CD4-positive, alpha-beta T cell (primary cell): ENCODE measurements at regions of chr1 and their contacts with region 1.

Region 1: DNA sequence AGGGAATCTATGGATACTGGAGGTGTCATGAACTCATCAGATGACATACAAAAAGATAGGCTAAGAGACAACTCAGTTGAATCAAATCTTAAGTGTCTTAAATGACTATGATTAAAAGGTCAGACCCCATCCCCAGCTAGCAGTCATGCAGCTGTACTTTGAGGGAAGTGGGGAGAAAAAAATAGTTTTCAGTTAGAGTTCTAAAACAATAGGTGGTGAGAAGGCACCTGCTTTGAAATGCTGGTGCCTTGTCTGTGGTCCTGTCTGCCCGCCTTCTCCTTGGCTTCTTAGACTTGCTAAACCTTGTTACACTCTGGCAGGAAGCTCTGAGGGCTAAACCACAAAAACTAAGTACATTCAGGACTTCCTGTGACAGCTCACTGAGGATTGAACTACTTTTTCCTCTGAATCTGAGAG is 15.3 kb downstream of the CD2 start:
- DNase-seq: peak in 13 of 14 experiments; percentile 60 to 94 (median 68)
- ATAC-seq: peak; percentile 79
- H3K4me3 ChIP-seq: no peak overlapping the region
- H3K4me3 Mint-ChIP-seq: peak overlapping the region; percentile 66
- H3K27ac ChIP-seq: peak overlapping the region; percentile 88 to 89
- H3K27ac Mint-ChIP-seq: peak overlapping the region; percentile 99
- H3K4me1 ChIP-seq: peaks cover 74% of the 10 kb centered on the region
- H3K4me1 Mint-ChIP-seq: peaks cover 97% of the 10 kb centered on the region
- H3K27me3 ChIP-seq: no peaks in the 10 kb centered on the region
- H3K27me3 Mint-ChIP-seq: no peaks in the 10 kb centered on the region
- CTCF ChIP-seq: no peak

Region 2: DNA sequence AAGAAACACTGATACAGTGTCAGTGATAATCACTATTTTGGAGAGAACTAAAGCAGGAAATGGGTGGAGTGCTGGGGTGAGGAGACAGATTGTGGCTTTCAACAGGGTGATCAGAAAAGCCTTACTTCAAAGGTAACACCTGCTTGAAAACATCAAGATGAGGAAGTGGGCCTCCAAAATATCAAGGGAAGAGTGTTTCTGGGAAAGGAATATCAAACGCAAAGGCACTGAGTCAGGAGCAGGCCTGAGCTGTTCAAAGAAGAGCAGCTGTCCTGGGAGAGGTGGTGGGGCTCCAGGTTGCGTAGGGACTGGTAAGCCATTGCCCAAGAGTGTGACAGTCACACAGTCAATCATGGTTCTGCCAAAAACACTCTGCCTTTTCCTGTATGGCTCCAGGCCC is 443.6 kb before region 1 on chr1:
- CTCF ChIA-PET with region 1: no interaction called
- POLR2A ChIA-PET with region 1: no interaction called
- intact Hi-C with region 1: no loop called
- DNase-seq: peak; percentile 25 to 83 (median 53)
- ATAC-seq: peak; percentile 91
- H3K4me3 ChIP-seq: peak overlapping the region; percentile 22
- H3K4me3 Mint-ChIP-seq: peak overlapping the region; percentile 62
- H3K27ac ChIP-seq: peak overlapping the region; percentile 72 to 85
- H3K27ac Mint-ChIP-seq: peak overlapping the region; percentile 91
- H3K4me1 ChIP-seq: peaks cover 60% of the 10 kb centered on the region
- H3K4me1 Mint-ChIP-seq: peaks cover 98% of the 10 kb centered on the region
- H3K27me3 ChIP-seq: no peaks in the 10 kb centered on the region
- H3K27me3 Mint-ChIP-seq: no peaks in the 10 kb centered on the region
- CTCF ChIP-seq: no peak

Region 3: DNA sequence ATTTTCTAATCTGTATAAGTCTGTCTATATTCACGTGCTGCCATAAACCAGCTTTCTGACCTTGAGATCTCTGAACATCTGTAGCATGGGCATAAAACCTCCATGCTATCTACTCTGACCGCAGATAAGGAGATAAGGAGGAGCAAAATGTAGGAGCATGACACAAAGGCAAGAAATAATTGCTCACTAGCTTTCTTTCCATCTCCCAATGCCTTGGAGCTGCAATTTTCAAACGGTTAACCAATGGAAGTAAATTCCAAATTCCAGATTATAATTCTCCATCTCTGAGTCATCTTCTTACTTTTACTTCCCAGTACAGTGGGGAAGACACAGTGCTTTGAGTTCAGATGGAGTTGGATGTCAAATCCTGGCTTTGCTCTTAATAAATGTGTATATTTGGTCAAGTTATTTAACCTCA is 240.4 kb before region 1 on chr1:
- CTCF ChIA-PET with region 1: no interaction called
- POLR2A ChIA-PET with region 1: no interaction called
- intact Hi-C with region 1: no loop called
- DNase-seq: no peak
- ATAC-seq: no peak
- H3K4me3 ChIP-seq: no peak overlapping the region
- H3K4me3 Mint-ChIP-seq: no peak overlapping the region
- H3K27ac ChIP-seq: no peak overlapping the region
- H3K27ac Mint-ChIP-seq: no peak overlapping the region
- H3K4me1 ChIP-seq: no peaks in the 10 kb centered on the region
- H3K4me1 Mint-ChIP-seq: no peaks in the 10 kb centered on the region
- H3K27me3 ChIP-seq: no peaks in the 10 kb centered on the region
- H3K27me3 Mint-ChIP-seq: no peaks in the 10 kb centered on the region
- CTCF ChIP-seq: no peak

Region 4: DNA sequence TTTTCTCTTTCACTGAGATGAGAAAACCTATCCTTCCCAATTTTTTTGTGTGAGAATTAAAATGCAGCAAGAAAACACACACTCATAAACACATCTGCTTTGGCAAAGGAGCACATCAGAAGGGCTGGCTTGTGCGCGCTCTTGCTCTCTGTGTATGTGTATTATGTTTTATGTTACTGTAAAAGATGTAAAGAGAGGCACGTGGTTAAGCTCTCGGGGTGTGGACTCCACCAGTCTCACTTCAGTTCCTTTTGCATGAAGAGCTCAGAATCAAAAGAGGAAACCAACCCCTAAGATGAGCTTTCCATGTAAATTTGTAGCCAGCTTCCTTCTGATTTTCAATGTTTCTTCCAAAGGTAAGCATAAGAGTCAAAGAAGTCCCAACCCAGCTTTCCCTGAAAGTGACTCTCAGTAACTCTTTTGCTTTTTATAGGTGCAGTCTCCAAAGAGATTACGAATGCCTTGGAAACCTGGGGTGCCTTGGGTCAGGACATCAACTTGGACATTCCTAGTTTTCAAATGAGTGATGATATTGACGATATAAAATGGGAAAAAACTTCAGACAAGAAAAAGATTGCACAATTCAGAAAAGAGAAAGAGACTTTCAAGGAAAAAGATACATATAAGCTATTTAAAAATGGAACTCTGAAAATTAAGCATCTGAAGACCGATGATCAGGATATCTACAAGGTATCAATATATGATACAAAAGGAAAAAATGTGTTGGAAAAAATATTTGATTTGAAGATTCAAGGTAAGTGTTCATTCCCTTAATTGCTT is 15.2 kb before region 1 on chr1 and contains the start of gene CD2:
- CTCF ChIA-PET with region 1: interaction called, 10 read pairs
- POLR2A ChIA-PET with region 1: interaction called, 412 read pairs
- intact Hi-C with region 1: loop called (anchors 1 to 2 kb)
- DNase-seq: peak in 11 of 14 experiments; percentile 47 to 82 (median 60)
- ATAC-seq: peak; percentile 86
- H3K4me3 ChIP-seq: peak within 1 kb of the TSS; percentile 78
- H3K4me3 Mint-ChIP-seq: peak within 1 kb of the TSS; percentile 97
- H3K27ac ChIP-seq: peak within 1 kb of the TSS; percentile 81 to 82
- H3K27ac Mint-ChIP-seq: peak within 1 kb of the TSS; percentile 99
- H3K4me1 ChIP-seq: peaks cover 19% of the 10 kb centered on the region
- H3K4me1 Mint-ChIP-seq: peaks cover 59% of the 10 kb centered on the region
- H3K27me3 ChIP-seq: no peaks in the 10 kb centered on the region
- H3K27me3 Mint-ChIP-seq: no peaks in the 10 kb centered on the region
- CTCF ChIP-seq: peak; percentile 13
- total RNA-seq, gene CD2: 150 to 151 TPM

Region 5: GRCh38 chr1:116794804-116795481 is 25.4 kb after region 1 on chr1:
- CTCF ChIA-PET with region 1: interaction called, 7 read pairs
- POLR2A ChIA-PET with region 1: interaction called, 290 read pairs
- intact Hi-C with region 1: no loop called
- DNase-seq: no peak
- ATAC-seq: no peak
- H3K4me3 ChIP-seq: no peak overlapping the region
- H3K4me3 Mint-ChIP-seq: no peak overlapping the region
- H3K27ac ChIP-seq: no peak overlapping the region
- H3K27ac Mint-ChIP-seq: no peak overlapping the region
- H3K4me1 ChIP-seq: peaks cover 50% of the 10 kb centered on the region
- H3K4me1 Mint-ChIP-seq: peaks cover 61% of the 10 kb centered on the region
- H3K27me3 ChIP-seq: no peaks in the 10 kb centered on the region
- H3K27me3 Mint-ChIP-seq: no peaks in the 10 kb centered on the region
- CTCF ChIP-seq: no peak

Region 6: DNA sequence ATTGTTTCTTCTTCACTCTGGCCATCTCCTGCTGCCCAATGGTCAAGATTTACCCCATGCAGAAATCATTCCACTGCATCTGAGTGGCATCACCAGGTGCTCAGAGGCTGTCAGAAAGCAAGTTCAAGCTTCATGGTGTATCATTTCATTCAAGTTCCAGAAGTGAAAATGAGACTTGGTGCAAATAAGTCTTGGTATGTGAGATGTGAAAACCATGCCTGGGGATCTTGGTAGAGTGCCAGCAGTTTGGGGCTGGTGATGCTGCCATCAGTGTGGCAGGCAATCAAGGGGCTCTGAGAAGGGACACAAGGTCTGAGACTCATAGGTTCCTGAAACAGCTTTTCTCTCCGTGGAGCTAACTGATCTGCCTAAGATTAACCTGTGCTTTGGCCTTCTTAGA is 36.7 kb after region 1 on chr1:
- CTCF ChIA-PET with region 1: interaction called, 16 read pairs
- POLR2A ChIA-PET with region 1: interaction called, 290 read pairs
- intact Hi-C with region 1: no loop called
- DNase-seq: peak in 11 of 14 experiments; percentile 29 to 79 (median 48)
- ATAC-seq: peak; percentile 27
- H3K4me3 ChIP-seq: peak overlapping the region; percentile 9
- H3K4me3 Mint-ChIP-seq: peak overlapping the region; percentile 64
- H3K27ac ChIP-seq: peak overlapping the region; percentile 11 to 80
- H3K27ac Mint-ChIP-seq: peak overlapping the region; percentile 93
- H3K4me1 ChIP-seq: peaks cover 78% of the 10 kb centered on the region
- H3K4me1 Mint-ChIP-seq: peaks cover 90% of the 10 kb centered on the region
- H3K27me3 ChIP-seq: no peaks in the 10 kb centered on the region
- H3K27me3 Mint-ChIP-seq: no peaks in the 10 kb centered on the region
- CTCF ChIP-seq: no peak

Region 7: DNA sequence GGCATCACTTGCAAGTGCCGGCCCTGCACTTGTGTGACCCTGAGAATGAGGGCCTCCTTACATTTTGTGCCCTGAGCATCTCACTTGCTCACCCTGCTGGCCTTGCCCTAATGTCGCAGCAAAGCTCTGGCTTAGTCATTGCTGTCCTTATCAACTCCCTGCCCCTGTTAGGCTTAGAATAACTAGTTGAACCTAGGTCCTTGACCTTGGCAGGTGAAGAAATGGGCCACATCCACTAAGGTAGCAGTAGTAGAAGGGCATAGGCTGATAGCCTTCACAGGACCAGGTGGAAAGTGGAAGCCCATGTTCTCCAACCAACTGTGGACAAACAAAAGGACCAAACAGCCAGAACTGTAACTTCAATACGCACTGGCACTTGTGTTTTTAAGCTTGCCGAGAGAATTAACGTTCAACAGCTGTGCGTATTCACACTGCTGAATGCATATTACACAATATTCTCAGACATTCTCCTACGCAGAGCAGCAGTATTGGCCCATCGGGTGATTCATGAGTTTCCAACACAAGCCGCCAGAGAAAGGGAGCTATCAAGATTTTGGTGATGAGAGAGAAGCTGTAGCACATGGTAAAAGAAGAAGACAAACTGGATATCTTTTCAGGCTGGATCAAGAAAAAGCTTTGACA is 112.4 kb after region 1 on chr1:
- CTCF ChIA-PET with region 1: interaction called, 3 read pairs
- POLR2A ChIA-PET with region 1: interaction called, 19 read pairs
- intact Hi-C with region 1: no loop called
- DNase-seq: peak in 6 of 14 experiments; percentile 9 to 55 (median 31)
- ATAC-seq: no peak
- H3K4me3 ChIP-seq: no peak overlapping the region
- H3K4me3 Mint-ChIP-seq: no peak overlapping the region
- H3K27ac ChIP-seq: no peak overlapping the region
- H3K27ac Mint-ChIP-seq: no peak overlapping the region
- H3K4me1 ChIP-seq: peaks cover 23% of the 10 kb centered on the region
- H3K4me1 Mint-ChIP-seq: peaks cover 3% of the 10 kb centered on the region
- H3K27me3 ChIP-seq: no peaks in the 10 kb centered on the region
- H3K27me3 Mint-ChIP-seq: no peaks in the 10 kb centered on the region
- CTCF ChIP-seq: peak; percentile 31

Region 8: DNA sequence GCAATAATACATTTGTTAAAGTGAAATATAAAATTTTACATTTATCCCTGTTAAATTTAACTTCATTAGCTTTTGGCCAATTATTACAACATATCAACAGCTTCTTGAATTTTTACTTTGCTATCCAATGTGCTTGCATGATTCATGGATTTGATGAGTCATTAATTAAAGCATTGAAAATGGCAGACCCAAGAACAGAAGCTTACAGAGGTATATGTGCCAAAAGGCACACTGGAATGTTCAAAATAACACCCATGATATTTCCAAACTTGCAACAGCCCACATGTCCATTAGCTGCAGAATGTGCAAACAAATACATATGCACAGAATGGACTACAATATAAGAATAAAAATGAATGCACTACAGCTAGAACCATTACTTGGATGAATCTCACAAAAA is 521.3 kb after region 1 on chr1:
- CTCF ChIA-PET with region 1: no interaction called
- POLR2A ChIA-PET with region 1: no interaction called
- intact Hi-C with region 1: no loop called
- DNase-seq: no peak
- ATAC-seq: no peak
- H3K4me3 ChIP-seq: no peak overlapping the region
- H3K4me3 Mint-ChIP-seq: no peak overlapping the region
- H3K27ac ChIP-seq: no peak overlapping the region
- H3K27ac Mint-ChIP-seq: no peak overlapping the region
- H3K4me1 ChIP-seq: no peaks in the 10 kb centered on the region
- H3K4me1 Mint-ChIP-seq: no peaks in the 10 kb centered on the region
- H3K27me3 ChIP-seq: peaks cover 0 to 5% of the 10 kb centered on the region in 2 experiments
- H3K27me3 Mint-ChIP-seq: no peaks in the 10 kb centered on the region
- CTCF ChIP-seq: no peak